ENCODE measurements at regions of chr5 and their contacts with region 1.

Region 1: GRCh38 chr5:59569608-59570334 is 323.8 kb downstream of the PDE4D start:
- DNase-seq: no peak
- ATAC-seq: peak; percentile 29
- H3K4me3 ChIP-seq: no peak overlapping the region
- H3K27ac ChIP-seq: no peak overlapping the region
- H3K4me1 ChIP-seq: peaks cover 16% of the 10 kb centered on the region; the same call in 1 of the 2 replicates
- H3K27me3 ChIP-seq: no peaks in the 10 kb centered on the region
- CTCF ChIP-seq: no peak

Region 2: GRCh38 chr5:59188419-59189225 is 381.1 kb before region 1 on chr5:
- CTCF ChIA-PET with region 1: no interaction called
- POLR2A ChIA-PET with region 1: no interaction called
- intact Hi-C with region 1: no loop called
- DNase-seq: peak; percentile 28
- ATAC-seq: peak; percentile 48; the same call in 1 of the 2 replicates
- H3K4me3 ChIP-seq: no peak overlapping the region
- H3K27ac ChIP-seq: no peak overlapping the region
- H3K4me1 ChIP-seq: peaks cover 3% of the 10 kb centered on the region; the same call in 1 of the 2 replicates
- H3K27me3 ChIP-seq: no peaks in the 10 kb centered on the region
- CTCF ChIP-seq: peak; percentile 40; the same call in 1 of the 2 replicates

Region 3: DNA sequence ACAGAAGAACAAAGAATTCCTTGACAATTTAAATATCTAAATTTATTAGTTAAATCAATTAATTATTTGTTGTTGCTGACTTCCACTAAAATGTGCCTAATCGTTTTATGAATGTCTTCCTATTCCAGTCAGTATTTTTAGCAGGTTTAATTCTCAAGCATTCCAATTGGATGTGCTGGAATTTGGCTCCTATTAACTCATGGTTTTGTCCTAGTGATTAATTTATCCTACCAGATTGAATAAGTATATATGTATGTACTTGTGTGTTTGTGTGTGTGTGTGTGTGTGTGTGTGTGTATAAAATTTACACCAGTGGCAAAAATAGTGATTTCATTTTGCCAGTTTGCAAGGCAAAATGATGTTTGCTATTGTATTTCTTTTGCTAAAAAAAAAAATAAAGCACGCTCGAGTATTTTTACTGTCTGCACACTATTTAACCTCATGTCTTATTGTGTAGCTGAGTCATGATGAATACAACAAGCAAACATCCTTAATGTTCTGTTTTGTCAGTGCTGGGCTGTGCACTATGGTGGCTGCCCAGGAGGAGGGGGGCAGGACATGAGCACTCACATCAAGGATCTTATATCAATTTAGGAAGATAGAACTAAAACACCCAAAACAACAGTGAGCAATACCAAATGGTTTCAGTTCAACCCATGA is 51.7 kb before region 1 on chr5:
- CTCF ChIA-PET with region 1: no interaction called
- POLR2A ChIA-PET with region 1: no interaction called
- intact Hi-C with region 1: loop called (anchors 5 kb)
- DNase-seq: peak; percentile 78
- ATAC-seq: peak; percentile 95
- H3K4me3 ChIP-seq: peak overlapping the region; percentile 48; the same call in 1 of the 2 replicates
- H3K27ac ChIP-seq: peak overlapping the region; percentile 88
- H3K4me1 ChIP-seq: peaks cover 39% of the 10 kb centered on the region
- H3K27me3 ChIP-seq: no peaks in the 10 kb centered on the region
- CTCF ChIP-seq: no peak

Region 4: GRCh38 chr5:59608745-59609144 is 39.0 kb after region 1 on chr5:
- CTCF ChIA-PET with region 1: no interaction called
- POLR2A ChIA-PET with region 1: no interaction called
- intact Hi-C with region 1: no loop called
- DNase-seq: no peak
- ATAC-seq: no peak
- H3K4me3 ChIP-seq: no peak overlapping the region
- H3K27ac ChIP-seq: no peak overlapping the region
- H3K4me1 ChIP-seq: no peaks in the 10 kb centered on the region
- H3K27me3 ChIP-seq: no peaks in the 10 kb centered on the region
- CTCF ChIP-seq: no peak

Measured in PC-3 (cell line).